AG04450 (cell line): ENCODE measurements at regions of chr10 and their contacts with region 1.

Region 1: GRCh38 chr10:9209105-9209798 is 1154.8 kb downstream of the GATA3 start:
- DNase-seq: peak; percentile 26
- H3K4me3 ChIP-seq: no peak overlapping the region
- H3K27ac ChIP-seq: no peak overlapping the region
- H3K27me3 ChIP-seq: no peaks in the 10 kb centered on the region
- CTCF ChIP-seq: peak; percentile 92

Region 2: GRCh38 chr10:7525314-7526016 is 1683.8 kb before region 1 on chr10:
- CTCF ChIA-PET with region 1: interaction called, 10 read pairs
- POLR2A ChIA-PET with region 1: no interaction called
- DNase-seq: peak; percentile 39
- H3K4me3 ChIP-seq: no peak overlapping the region
- H3K27ac ChIP-seq: no peak overlapping the region
- H3K27me3 ChIP-seq: no peaks in the 10 kb centered on the region
- CTCF ChIP-seq: peak; percentile 78

Region 3: GRCh38 chr10:7856678-7857077 is 1352.6 kb before region 1 on chr10:
- CTCF ChIA-PET with region 1: interaction called, 10 read pairs
- POLR2A ChIA-PET with region 1: no interaction called
- DNase-seq: no peak
- H3K4me3 ChIP-seq: no peak overlapping the region
- H3K27ac ChIP-seq: no peak overlapping the region
- H3K27me3 ChIP-seq: no peaks in the 10 kb centered on the region
- CTCF ChIP-seq: no peak

Region 4: DNA sequence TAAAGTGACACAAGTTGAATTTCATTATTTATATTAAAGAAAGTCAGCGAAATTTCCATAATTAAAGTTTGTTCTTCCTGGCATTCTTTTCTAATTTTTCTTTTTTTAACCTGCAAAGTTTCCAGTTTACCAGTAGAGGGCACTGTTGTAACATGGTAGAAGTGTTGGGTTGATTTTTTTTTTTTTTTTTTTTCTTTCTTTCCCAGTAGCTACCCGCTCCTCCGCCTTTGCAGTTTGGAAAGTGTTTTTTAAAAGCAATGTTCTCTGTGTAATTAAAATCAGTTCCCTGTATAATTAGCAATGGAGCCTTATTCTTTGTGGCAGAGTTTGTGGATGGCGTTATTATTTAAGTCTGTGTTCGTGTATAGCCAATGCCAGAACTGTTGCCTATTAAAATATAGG is 1337.2 kb before region 1 on chr10:
- CTCF ChIA-PET with region 1: interaction called, 19 read pairs
- POLR2A ChIA-PET with region 1: no interaction called
- DNase-seq: no peak
- H3K4me3 ChIP-seq: peak overlapping the region; percentile 39
- H3K27ac ChIP-seq: no peak overlapping the region
- H3K27me3 ChIP-seq: no peaks in the 10 kb centered on the region
- CTCF ChIP-seq: peak; percentile 75

Region 5: GRCh38 chr10:9193120-9193519 is 16.1 kb before region 1 on chr10:
- CTCF ChIA-PET with region 1: interaction called, 29 read pairs
- POLR2A ChIA-PET with region 1: no interaction called
- DNase-seq: no peak
- H3K4me3 ChIP-seq: no peak overlapping the region
- H3K27ac ChIP-seq: no peak overlapping the region
- H3K27me3 ChIP-seq: no peaks in the 10 kb centered on the region
- CTCF ChIP-seq: no peak

Region 6: GRCh38 chr10:9198611-9199010 is 10.6 kb before region 1 on chr10:
- CTCF ChIA-PET with region 1: interaction called, 29 read pairs
- POLR2A ChIA-PET with region 1: no interaction called
- DNase-seq: peak; percentile 62
- H3K4me3 ChIP-seq: no peak overlapping the region
- H3K27ac ChIP-seq: no peak overlapping the region
- H3K27me3 ChIP-seq: no peaks in the 10 kb centered on the region
- CTCF ChIP-seq: no peak